ENCODE measurements at regions of chr19 and their contacts with region 1.

Region 1: DNA sequence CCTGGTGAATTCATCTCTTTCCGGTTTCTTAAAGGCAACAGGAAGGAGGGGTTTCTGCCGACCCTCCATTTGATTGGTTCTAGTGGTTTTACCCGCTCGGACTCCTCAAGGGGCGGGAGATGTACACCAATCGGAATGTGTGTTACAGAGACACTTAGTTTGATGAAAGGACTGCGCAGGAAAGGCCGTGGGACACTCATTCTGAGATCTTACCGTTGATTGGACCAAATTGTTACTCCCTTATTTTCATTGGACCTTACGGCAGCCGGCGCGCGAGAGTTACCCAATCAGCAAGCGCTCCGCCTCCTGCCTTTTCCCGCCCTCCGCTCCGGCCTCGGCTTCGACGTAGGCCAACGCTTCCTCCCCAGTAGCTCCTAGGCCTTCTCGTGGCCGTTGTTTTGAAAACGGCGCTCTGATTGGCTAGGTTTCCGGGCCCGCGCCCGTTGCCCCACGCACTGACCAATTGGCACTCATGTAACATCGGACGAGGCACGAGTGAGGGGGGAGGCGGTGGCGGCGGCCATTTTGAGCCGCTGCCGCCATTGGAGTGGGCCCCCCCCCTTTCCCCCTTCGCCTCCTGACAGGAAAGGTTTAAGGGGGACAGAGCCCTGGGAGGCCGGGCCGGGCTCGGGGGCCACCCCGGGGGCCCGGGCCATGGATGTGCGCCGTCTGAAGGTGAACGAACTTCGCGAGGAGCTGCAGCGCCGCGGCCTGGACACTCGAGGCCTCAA is at the start of gene HNRNPUL1:
- DNase-seq: peak; percentile 100
- H3K27ac ChIP-seq: peak within 1 kb of the TSS; percentile 98
- CTCF ChIP-seq: no peak

Region 2: DNA sequence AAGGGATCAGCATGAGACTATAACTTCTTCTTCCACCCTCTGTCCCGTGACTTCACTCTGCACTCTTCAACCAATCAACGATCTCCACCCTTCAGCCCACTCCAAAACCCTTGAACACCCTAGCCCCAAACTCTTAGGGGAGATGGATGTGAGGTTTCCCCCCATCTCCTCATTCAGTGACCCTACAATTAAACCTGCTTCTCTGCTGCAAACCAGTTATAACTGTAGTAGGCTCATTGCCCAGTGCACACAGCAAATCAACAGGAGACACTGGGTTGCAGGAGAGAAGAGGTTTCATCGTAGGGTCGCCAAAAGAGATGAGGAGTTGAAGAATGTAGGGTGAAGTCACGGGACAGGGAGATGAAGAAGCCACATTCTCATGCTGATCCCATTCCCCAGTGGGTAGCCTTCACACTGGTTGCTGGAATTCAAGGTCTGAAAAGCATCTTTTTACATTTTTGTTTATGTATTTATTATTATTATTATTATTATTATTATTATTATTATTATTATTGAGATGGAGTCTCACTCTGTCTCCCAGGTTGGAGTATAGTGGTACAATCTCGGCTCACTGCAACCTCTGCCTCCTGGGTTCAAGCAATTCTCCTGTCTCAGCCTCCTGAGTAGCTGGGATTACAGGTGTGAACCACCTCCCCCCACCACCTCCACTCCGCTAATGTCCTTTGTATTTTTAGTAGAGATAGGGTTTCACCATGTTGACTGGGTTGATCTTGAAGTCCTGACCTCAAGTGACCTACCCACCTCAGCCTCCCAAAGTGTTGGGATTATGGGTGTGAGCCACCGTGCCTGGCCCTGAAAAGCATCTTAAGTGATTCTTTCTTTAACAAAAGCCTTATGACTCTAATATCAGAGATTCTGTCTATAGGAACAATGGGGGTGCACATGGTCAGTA is 76.8 kb before region 1 on chr19:
- CTCF ChIA-PET with region 1: interaction called, 3 read pairs
- POLR2A ChIA-PET with region 1: interaction called, 11 read pairs
- DNase-seq: no peak
- H3K27ac ChIP-seq: no peak overlapping the region
- CTCF ChIP-seq: no peak

Region 3: GRCh38 chr19:41206926-41207750 is 56.9 kb before region 1 on chr19:
- CTCF ChIA-PET with region 1: interaction called, 41 read pairs
- POLR2A ChIA-PET with region 1: interaction called, 12 read pairs
- DNase-seq: no peak
- H3K27ac ChIP-seq: peak overlapping the region; percentile 7; the same call in 1 of the 2 replicates
- CTCF ChIP-seq: no peak

Region 4: DNA sequence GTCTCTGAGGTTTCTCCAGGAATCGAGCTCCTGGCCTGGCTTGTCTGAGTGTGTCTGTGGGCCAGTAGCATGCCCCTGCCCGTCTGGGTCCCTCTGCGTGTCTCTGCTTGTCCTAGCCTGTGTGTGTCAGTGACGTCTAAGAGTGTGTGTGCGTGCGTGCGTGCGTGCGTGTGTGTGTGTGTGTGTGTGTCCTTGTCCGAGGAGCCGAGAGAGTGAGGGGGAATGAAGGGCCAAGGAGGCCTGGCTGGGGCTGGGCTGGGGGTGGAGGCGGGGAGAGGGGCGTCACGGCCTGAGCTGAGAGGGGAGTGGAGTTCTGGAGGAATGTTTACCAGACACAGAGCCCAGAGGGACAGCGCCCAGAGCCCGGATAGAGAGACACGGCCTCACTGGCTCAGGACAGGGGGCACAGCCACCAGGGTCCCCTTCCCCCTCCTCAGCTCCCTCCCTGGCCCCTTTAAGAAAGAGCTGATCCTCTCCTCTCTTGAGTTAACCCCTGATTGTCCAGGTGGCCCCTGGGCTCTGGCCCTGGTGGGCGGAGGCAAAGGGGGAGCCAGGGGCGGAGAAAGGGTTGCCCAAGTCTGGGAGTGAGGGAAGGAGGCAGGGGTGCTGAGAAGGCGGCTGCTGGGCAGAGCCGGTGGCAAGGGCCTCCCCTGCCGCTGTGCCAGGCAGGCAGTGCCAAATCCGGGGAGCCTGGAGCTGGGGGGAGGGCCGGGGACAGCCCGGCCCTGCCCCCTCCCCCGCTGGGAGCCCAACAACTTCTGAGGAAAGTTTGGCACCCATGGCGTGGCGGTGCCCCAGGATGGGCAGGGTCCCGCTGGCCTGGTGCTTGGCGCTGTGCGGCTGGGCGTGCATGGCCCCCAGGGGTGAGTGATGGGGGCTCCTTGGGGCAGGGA is 45.2 kb before region 1 on chr19 and contains the start of gene AXL:
- CTCF ChIA-PET with region 1: interaction called, 11 read pairs
- POLR2A ChIA-PET with region 1: interaction called, 5 read pairs
- DNase-seq: peak; percentile 87
- H3K27ac ChIP-seq: peak within 1 kb of the TSS; percentile 98
- CTCF ChIP-seq: no peak

Region 5: DNA sequence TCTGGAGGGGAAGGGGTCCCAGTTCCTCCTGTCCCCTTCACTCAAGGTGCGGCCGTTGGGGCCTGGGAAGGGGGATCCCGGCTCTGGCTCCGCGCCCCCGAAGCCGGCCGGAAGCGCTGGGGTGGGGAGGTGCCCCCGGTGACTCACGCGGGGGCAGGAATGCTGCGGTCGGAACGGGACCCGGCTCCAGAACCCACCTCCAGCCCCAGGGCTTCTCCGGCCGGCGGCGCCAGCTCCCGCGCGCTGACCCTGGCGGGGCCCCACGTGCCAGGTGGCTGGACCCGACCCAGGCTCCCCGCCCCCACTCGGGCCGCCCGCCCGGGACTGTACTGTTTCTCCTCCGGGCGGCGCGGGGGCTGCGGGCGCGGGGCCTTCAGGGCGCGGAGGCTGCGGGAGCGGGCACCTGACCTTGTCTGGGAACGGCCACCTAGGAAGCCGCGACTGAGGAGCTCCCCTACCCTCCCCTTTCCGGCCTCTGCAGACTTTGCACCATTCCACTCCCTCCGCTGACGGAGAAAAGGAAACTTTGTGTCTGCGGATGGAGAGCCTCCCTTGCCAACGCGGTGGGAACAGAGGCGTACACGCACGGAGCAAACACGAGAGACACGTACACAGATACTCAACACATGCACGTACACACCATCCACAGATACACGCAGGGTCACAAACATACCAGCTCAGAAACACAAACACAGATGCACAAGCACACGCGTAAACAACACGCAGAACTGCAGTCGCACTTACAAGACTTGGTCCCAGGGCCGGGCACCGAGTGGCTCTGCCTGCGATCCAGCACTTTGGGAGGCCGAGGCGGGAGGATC is 37.8 kb before region 1 on chr19:
- CTCF ChIA-PET with region 1: interaction called, 11 read pairs
- POLR2A ChIA-PET with region 1: no interaction called
- DNase-seq: peak; percentile 94
- H3K27ac ChIP-seq: peak overlapping the region; percentile 98
- CTCF ChIP-seq: no peak

Region 6: GRCh38 chr19:41325947-41326706 is 62.1 kb after region 1 on chr19:
- CTCF ChIA-PET with region 1: no interaction called
- POLR2A ChIA-PET with region 1: interaction called, 13 read pairs
- DNase-seq: no peak
- H3K27ac ChIP-seq: peak overlapping the region; percentile 97
- CTCF ChIP-seq: no peak